HepG2 (cell line): ENCODE measurements at regions of chr2 and their contacts with region 1.

Region 1: DNA sequence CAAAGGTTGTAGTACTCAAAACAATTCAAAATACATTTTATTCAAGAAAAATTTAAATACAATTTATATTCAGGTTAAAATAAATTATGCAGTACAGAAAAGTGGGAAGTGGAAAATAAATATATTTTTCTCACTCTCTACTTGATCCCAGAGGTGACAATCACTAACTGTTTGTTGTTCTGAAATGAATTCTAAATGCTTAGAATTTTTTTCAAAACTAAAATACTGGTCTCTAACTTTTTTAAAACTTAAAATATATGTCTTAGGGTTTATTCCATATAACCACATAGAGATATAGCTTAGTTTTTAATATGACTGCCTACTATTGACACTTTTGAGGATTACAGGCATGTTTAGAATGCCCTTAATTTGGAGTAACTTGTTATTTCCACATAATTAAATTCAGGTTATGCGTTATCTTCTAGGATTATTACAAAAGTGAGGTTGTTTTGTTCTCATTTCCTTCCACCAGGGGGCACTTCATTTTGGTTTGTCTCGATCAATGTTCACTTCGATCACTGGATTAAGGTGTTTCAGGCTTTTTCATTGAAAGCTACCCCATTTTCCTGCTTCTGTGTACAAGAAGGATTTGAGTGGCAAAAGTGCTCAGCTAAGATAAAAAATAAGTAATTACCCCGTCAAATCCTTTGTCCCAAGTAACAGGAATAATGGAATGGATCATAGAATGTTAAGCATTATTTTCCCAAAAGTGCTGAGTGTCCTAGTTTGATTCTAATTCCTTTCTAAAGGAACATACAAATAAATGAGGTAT is 27.1 kb upstream of the TFPI start:
- DNase-seq: peak; percentile 59
- ATAC-seq: peak; percentile 18; the same call in 1 of the 3 replicates
- H3K4me3 ChIP-seq: peak overlapping the region; percentile 21 to 60 (median 51); a peak in 5 of 6 replicates
- H3K27ac ChIP-seq: no peak overlapping the region
- H3K4me1 ChIP-seq: peaks cover 33% of the 10 kb centered on the region
- H3K27me3 ChIP-seq: no peaks in the 10 kb centered on the region
- CTCF ChIP-seq: peak; percentile 79
- EP300 ChIP-seq: no peak
- POLR2A ChIP-seq: no peak
- RAD21 ChIP-seq: no peak; the same call in 1 of the 2 replicates

Region 2: DNA sequence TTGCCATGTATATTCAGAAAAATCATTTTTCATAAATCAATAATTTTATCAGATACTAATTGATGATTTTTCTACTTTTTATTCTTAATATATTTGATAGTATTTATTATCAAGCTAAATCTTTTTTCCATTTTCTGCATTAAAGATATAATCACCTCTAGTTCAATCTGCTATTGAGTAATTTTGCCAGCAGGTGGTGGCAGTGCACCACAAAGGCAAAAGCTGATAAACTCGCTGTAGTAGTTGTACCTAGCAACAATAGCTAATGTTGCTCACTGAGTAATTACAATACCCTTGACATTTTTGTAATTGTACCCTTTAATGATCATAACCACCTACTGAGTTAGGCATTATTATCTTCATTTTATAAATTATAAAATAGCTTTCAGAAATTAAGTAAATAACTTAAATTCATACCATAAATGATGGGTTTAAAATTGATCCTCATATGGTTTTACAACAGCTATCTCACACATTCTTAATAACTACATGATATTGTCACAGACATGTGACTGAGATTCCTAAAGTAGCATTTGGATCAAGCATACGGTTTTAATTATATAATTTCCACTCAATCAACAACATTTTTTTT is 81.3 kb before region 1 on chr2:
- CTCF ChIA-PET with region 1: interaction called, 258 read pairs
- POLR2A ChIA-PET with region 1: no interaction called
- in situ Hi-C with region 1: loop called (anchors 5 kb)
- intact Hi-C with region 1: loop called (anchors 1 kb)
- DNase-seq: peak; percentile 66
- ATAC-seq: peak; percentile 72
- H3K4me3 ChIP-seq: no peak overlapping the region
- H3K27ac ChIP-seq: peak overlapping the region; percentile 45
- H3K4me1 ChIP-seq: peaks cover 44% of the 10 kb centered on the region
- H3K27me3 ChIP-seq: no peaks in the 10 kb centered on the region
- CTCF ChIP-seq: peak; percentile 81
- EP300 ChIP-seq: no peak
- POLR2A ChIP-seq: no peak
- RAD21 ChIP-seq: peak; percentile 91

Region 3: DNA sequence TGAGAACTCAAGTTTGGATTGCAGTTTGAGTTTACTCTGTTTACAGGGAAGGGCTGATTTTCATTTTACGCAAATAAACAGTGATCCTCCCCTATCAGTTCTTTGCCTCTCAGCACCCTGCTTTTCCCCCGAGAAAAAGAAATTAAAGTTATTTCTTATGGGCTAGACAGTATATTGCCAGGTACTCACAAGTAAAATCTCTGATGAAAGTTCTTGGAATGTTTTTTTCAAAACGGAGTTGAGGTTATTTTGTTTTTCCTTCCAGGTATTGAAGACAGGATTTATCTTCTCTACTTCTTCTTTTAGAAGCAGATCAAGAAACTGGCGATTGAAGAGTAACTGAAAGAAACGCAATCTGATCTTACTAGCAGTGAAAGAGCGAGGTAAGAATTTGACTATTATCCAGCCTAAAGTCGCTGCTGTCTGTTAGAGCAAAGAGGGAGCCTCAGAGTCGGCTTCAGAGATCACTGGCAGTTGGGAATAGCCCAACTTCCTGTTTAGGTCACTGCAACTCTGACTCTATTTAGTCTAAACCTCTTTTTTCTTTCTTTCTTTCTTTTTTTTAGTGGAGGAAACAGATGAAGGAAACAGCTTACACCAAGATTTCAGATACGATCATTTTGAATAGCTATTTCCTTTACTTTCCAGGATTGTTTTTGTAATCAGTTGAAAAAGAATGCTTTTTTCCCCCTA is 27.2 kb before region 1 on chr2 and contains the start of gene TFPI:
- CTCF ChIA-PET with region 1: no interaction called
- POLR2A ChIA-PET with region 1: no interaction called
- in situ Hi-C with region 1: no loop called
- intact Hi-C with region 1: loop called (anchors 1 kb)
- DNase-seq: peak; percentile 64
- ATAC-seq: peak; percentile 52
- H3K4me3 ChIP-seq: peak within 1 kb of the TSS; percentile 55 to 71 (median 63)
- H3K27ac ChIP-seq: peak within 1 kb of the TSS; percentile 74
- H3K4me1 ChIP-seq: peaks cover 42% of the 10 kb centered on the region
- H3K27me3 ChIP-seq: no peaks in the 10 kb centered on the region
- CTCF ChIP-seq: no peak
- EP300 ChIP-seq: no peak
- POLR2A ChIP-seq: peak; percentile 49 to 50; a peak in 2 of 4 replicates
- RAD21 ChIP-seq: no peak
- total RNA-seq, gene TFPI: 161 and 301 TPM in 2 replicates